ENCODE measurements at regions of chr7 and their contacts with region 1.

Region 1: DNA sequence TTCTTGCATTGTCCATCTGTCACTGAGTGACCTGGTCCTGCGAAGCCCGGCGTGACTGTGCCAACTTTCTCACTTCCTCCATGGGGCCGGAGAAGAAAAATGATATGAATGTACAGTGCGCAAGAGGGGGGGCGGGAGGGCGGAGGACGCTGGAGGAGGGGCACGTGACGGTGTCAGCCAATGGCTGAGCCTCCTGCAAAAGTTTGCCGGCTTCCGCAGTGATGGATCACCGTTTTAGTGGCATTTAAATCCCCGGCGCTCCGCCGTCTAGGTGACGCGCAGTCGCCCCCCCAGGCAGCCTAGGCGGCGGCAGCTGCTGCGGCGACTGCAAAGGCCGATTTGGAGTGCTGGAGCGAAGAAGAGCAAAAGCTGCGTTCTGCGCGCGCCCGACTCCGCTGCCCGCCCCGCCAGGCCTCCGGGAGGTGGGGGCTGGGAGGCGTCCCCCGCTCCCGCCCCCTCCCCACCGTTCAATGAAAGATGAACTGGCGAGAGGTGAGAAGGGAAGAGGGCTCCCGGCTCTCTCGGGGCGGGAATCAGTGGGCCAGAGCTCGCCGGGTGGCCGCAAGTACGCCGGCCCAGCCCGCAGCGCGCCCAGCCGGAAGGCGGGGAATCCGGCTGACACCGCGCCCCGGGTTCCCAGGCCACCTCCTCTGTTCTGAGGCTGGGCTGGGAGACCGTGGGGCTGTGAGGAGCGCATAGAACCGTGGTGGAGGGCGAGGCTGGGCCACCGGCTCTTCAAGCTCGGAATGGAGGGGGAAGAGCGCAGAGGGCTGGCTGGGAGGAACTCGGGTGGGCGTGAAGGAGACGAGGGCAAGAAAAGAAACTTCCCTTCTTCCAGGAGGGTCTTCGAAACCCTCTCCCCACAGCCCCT is at the start of gene HOXA1:
- DNase-seq: peak; percentile 93
- H3K4me3 Mint-ChIP-seq: peak within 1 kb of the TSS; percentile 83
- H3K27ac Mint-ChIP-seq: peak within 1 kb of the TSS; percentile 99
- H3K4me1 Mint-ChIP-seq: peaks cover 46% of the 10 kb centered on the region
- H3K27me3 Mint-ChIP-seq: no peaks in the 10 kb centered on the region
- CTCF ChIP-seq: no peak
- total RNA-seq, gene HOXA1: 5.6 and 7.1 TPM in 2 replicates

Region 2: GRCh38 chr7:26686448-26686981 is 409.6 kb before region 1 on chr7:
- CTCF ChIA-PET with region 1: interaction called, 7 read pairs
- POLR2A ChIA-PET with region 1: interaction called, 5 read pairs
- intact Hi-C with region 1: loop called (anchors 1 kb)
- DNase-seq: peak; percentile 51
- H3K4me3 Mint-ChIP-seq: no peak overlapping the region
- H3K27ac Mint-ChIP-seq: no peak overlapping the region
- H3K4me1 Mint-ChIP-seq: peaks cover 3% of the 10 kb centered on the region
- H3K27me3 Mint-ChIP-seq: no peaks in the 10 kb centered on the region
- CTCF ChIP-seq: peak; percentile 59

Region 3: GRCh38 chr7:26948617-26949118 is 147.5 kb before region 1 on chr7:
- CTCF ChIA-PET with region 1: no interaction called
- POLR2A ChIA-PET with region 1: interaction called, 12 read pairs
- intact Hi-C with region 1: no loop called
- DNase-seq: no peak
- H3K4me3 Mint-ChIP-seq: no peak overlapping the region
- H3K27ac Mint-ChIP-seq: no peak overlapping the region
- H3K4me1 Mint-ChIP-seq: peaks cover 10% of the 10 kb centered on the region
- H3K27me3 Mint-ChIP-seq: no peaks in the 10 kb centered on the region
- CTCF ChIP-seq: no peak

Region 4: DNA sequence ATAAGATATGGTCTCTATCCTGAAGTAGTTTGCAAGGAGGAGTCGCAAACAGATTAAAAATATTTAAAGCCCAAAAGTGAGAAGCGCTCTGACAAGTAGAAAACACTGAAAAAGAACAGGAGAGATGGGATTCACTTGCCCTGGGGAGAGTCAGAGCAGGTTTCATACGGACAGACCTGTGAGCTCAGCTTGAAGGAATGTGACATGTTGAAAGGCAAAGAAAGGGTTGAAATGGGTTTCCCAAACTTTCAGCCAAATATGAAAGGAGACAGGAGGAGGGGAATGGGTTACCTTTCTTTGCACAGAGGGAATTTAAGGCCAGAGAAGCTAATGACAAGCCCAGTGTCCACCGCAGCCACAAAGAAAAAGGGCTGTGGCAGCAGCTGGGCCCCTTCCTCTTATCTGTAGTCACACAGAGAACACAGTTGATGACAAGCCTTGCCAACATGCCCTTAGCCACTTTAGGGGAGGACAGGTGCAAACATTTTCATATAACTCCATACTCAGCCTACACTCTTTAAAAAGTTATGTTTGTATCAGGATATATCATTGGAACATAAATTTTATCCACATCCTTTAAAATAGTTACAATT is 15.2 kb before region 1 on chr7:
- CTCF ChIA-PET with region 1: interaction called, 4 read pairs
- POLR2A ChIA-PET with region 1: interaction called, 70 read pairs
- intact Hi-C with region 1: no loop called
- DNase-seq: peak; percentile 73
- H3K4me3 Mint-ChIP-seq: peak overlapping the region; percentile 11
- H3K27ac Mint-ChIP-seq: peak overlapping the region; percentile 92
- H3K4me1 Mint-ChIP-seq: peaks cover 40% of the 10 kb centered on the region
- H3K27me3 Mint-ChIP-seq: no peaks in the 10 kb centered on the region
- CTCF ChIP-seq: no peak

Region 5: GRCh38 chr7:27130540-27131389 is 34.6 kb after region 1 on chr7 and contains the start of gene HOXA4:
- CTCF ChIA-PET with region 1: interaction called, 18 read pairs
- POLR2A ChIA-PET with region 1: interaction called, 3 read pairs
- intact Hi-C with region 1: no loop called
- DNase-seq: peak; percentile 93
- H3K4me3 Mint-ChIP-seq: peak within 1 kb of the TSS; percentile 80
- H3K27ac Mint-ChIP-seq: peak within 1 kb of the TSS; percentile 51
- H3K4me1 Mint-ChIP-seq: peaks cover 32% of the 10 kb centered on the region
- H3K27me3 Mint-ChIP-seq: no peaks in the 10 kb centered on the region
- CTCF ChIP-seq: no peak
- total RNA-seq, gene HOXA4: 2.6 and 3.7 TPM in 2 replicates

Region 6: DNA sequence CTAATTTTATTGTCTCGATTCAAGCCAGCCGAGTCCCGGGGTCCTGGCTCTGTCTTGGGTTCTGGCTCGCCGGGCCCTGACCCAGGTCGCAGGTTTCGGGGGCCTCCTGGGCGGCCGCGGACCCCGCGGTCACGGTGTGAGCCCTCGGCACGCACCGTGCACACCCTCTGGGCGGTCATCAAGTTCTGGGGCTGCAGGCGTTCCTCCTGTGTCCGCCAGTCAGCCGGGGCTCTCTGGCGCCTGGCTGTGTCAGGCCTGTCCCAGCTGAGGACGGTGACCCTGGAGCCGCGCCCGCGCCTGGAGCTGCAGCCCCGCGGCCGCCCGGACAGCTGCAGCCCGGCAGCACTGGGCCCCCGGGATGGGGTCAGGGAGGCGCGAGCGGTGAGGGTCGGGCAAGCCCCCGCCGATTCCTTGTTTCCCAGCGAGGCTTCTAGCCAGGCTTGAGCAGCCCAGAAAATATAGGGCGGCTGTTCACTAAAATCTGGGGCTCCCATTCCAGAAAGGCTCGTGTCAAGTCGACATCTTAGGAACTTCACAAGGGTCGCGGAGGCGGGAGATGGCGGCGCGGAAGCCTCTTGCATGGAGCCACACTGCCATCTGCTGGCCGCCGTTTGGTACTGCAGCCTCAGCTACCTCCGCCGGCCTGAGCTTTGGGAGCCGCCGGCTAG is 64.5 kb after region 1 on chr7:
- CTCF ChIA-PET with region 1: interaction called, 6 read pairs
- POLR2A ChIA-PET with region 1: interaction called, 20 read pairs
- intact Hi-C with region 1: no loop called
- DNase-seq: peak; percentile 83
- H3K4me3 Mint-ChIP-seq: peak overlapping the region; percentile 84
- H3K27ac Mint-ChIP-seq: no peak overlapping the region
- H3K4me1 Mint-ChIP-seq: peaks cover 8% of the 10 kb centered on the region
- H3K27me3 Mint-ChIP-seq: no peaks in the 10 kb centered on the region
- CTCF ChIP-seq: peak; percentile 96

Region 7: DNA sequence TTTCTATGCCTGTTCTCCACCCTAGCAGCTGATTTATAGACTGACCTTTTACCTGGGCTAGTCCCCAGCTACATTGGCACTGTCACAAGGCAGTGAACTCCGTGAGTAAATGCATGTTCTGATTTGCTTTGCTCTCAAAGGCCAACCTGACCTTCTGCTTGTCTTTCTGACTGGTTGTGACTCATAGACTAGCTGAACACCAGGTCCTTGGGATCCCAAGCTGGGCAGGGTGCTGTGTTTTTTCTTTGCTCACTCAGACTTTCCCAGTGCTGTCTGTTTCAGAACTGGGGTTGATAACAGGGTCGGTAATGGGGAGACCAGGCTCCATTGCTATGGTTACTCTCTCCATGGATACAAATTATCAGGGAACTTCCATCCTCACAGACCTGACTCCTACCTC is 181.5 kb after region 1 on chr7:
- CTCF ChIA-PET with region 1: no interaction called
- POLR2A ChIA-PET with region 1: no interaction called
- intact Hi-C with region 1: no loop called
- DNase-seq: peak; percentile 74
- H3K4me3 Mint-ChIP-seq: no peak overlapping the region
- H3K27ac Mint-ChIP-seq: peak overlapping the region; percentile 36
- H3K4me1 Mint-ChIP-seq: peaks cover 6% of the 10 kb centered on the region
- H3K27me3 Mint-ChIP-seq: no peaks in the 10 kb centered on the region
- CTCF ChIP-seq: no peak